Activated CD4-positive, alpha-beta memory T cell treated with anti-CD3 and anti-CD28 coated beads for 36 hours (primary cell): ENCODE measurements at regions of chr1 and their contacts with region 1.

Region 1: GRCh38 chr1:200890818-200891773 is 3.6 kb upstream of the INAVA start:
- DNase-seq: no peak
- H3K4me3 Mint-ChIP-seq: peak overlapping the region; percentile 27
- H3K27ac Mint-ChIP-seq: peak overlapping the region; percentile 29
- H3K4me1 Mint-ChIP-seq: peaks cover 52% of the 10 kb centered on the region
- H3K27me3 Mint-ChIP-seq: peaks cover 32% of the 10 kb centered on the region

Region 2: GRCh38 chr1:200877839-200878551 is 13.1 kb before region 1 on chr1:
- CTCF ChIA-PET with region 1: interaction called, 11 read pairs
- POLR2A ChIA-PET with region 1: interaction called, 13 read pairs
- intact Hi-C with region 1: loop called (anchors 1 kb)
- DNase-seq: peak; percentile 89
- H3K4me3 Mint-ChIP-seq: no peak overlapping the region
- H3K27ac Mint-ChIP-seq: no peak overlapping the region
- H3K4me1 Mint-ChIP-seq: peaks cover 56% of the 10 kb centered on the region
- H3K27me3 Mint-ChIP-seq: peaks cover 33% of the 10 kb centered on the region

Region 3: GRCh38 chr1:200905411-200906052 is 14.4 kb after region 1 on chr1:
- CTCF ChIA-PET with region 1: interaction called, 14 read pairs
- POLR2A ChIA-PET with region 1: interaction called, 18 read pairs
- intact Hi-C with region 1: loop called (anchors 1 kb)
- DNase-seq: peak; percentile 68
- H3K4me3 Mint-ChIP-seq: no peak overlapping the region
- H3K27ac Mint-ChIP-seq: no peak overlapping the region
- H3K4me1 Mint-ChIP-seq: peaks cover 15% of the 10 kb centered on the region
- H3K27me3 Mint-ChIP-seq: peaks cover 40% of the 10 kb centered on the region

Region 4: DNA sequence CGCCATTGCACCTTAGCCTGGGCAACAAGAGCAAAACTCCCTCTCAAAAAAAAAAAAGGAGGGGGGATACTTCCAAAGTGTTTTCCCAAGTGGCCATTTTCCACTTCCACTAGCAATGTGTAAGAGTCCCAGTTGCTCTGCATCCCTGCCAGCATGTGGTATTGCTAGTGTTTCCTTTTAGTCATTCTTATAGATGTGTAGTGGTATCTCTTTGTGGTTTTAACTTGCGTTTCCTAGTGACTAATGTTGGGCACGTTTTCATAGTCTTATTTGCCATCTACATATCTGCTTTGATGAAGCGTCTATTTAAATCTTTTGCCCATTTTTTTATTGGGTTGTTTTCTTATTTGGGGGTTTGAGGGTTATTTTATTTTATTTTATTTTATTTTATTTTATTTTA is 34.7 kb after region 1 on chr1:
- CTCF ChIA-PET with region 1: no interaction called
- POLR2A ChIA-PET with region 1: no interaction called
- intact Hi-C with region 1: loop called (anchors 1 kb)
- DNase-seq: peak; percentile 35
- H3K4me3 Mint-ChIP-seq: no peak overlapping the region
- H3K27ac Mint-ChIP-seq: no peak overlapping the region
- H3K4me1 Mint-ChIP-seq: peaks cover 5% of the 10 kb centered on the region
- H3K27me3 Mint-ChIP-seq: peaks cover 17% of the 10 kb centered on the region

Region 5: GRCh38 chr1:201042779-201043461 is 151.8 kb after region 1 on chr1:
- CTCF ChIA-PET with region 1: no interaction called
- POLR2A ChIA-PET with region 1: no interaction called
- intact Hi-C with region 1: loop called (anchors 5 kb)
- DNase-seq: peak; percentile 81
- H3K4me3 Mint-ChIP-seq: no peak overlapping the region
- H3K27ac Mint-ChIP-seq: no peak overlapping the region
- H3K4me1 Mint-ChIP-seq: peaks cover 3% of the 10 kb centered on the region
- H3K27me3 Mint-ChIP-seq: no peaks in the 10 kb centered on the region